OCI-LY7 (cell line): ENCODE measurements at regions of chr12 and their contacts with region 1.

Region 1: DNA sequence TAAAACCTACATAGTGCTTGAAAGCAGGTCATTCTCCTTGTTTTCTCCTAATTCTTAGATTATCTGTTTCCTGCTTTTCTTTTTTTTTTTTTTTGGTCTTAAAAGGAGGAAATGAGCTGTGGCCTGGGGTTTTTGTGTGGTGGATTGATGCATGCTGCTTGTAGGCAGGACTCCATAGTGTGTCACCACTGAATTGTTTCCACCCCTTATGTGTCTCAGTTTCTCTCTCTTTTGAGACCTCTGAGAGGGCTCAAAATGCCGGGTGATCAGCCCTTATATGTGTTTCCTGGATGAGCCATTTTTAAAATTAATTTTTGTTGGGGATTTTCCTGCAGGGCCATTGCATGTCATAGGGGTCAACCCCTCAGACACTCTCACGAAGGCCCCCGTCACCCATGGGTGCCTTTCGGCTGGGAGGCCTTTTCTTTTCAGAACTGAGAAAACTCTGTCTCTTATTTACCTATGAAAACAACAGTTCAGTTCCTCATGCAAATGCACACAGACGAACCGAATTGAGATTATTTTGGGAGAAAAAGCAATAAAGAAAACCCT is 32.0 kb upstream of the LRRK2 start:
- DNase-seq: peak; percentile 47
- H3K4me3 ChIP-seq: no peak overlapping the region
- H3K27ac ChIP-seq: peak overlapping the region; percentile 2
- H3K4me1 ChIP-seq: peaks cover 9% of the 10 kb centered on the region
- CTCF ChIP-seq: no peak

Region 2: DNA sequence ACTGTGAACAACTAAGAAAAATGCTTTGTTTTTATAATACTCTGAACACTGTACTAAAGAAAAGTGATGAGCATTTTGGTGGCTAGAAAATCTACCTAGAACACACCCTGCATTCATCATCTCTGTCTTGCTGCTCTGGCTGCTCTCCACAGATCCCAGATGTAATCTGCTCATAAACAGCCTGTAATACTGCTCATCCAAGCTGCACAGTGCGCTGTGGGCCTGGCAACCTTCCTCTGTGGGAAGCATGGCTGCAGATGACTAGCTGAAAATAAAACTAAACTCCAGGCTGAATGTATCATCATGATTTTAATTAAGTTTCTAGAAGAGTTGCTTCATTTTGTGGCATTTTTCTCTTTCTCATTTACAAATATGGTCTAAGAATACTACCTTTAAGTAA is 287.6 kb before region 1 on chr12:
- CTCF ChIA-PET with region 1: no interaction called
- POLR2A ChIA-PET with region 1: no interaction called
- intact Hi-C with region 1: no loop called
- DNase-seq: no peak
- H3K4me3 ChIP-seq: no peak overlapping the region
- H3K27ac ChIP-seq: no peak overlapping the region
- H3K4me1 ChIP-seq: no peaks in the 10 kb centered on the region
- CTCF ChIP-seq: no peak

Region 3: GRCh38 chr12:40181490-40181889 is 11.3 kb before region 1 on chr12:
- CTCF ChIA-PET with region 1: no interaction called
- POLR2A ChIA-PET with region 1: interaction called, 29 read pairs
- intact Hi-C with region 1: no loop called
- DNase-seq: no peak
- H3K4me3 ChIP-seq: no peak overlapping the region
- H3K27ac ChIP-seq: no peak overlapping the region
- H3K4me1 ChIP-seq: no peaks in the 10 kb centered on the region
- CTCF ChIP-seq: no peak

Region 4: GRCh38 chr12:40208707-40209446 is 16.1 kb after region 1 on chr12:
- CTCF ChIA-PET with region 1: no interaction called
- POLR2A ChIA-PET with region 1: interaction called, 32 read pairs
- intact Hi-C with region 1: no loop called
- DNase-seq: peak; percentile 57
- H3K4me3 ChIP-seq: peak overlapping the region; percentile 3
- H3K27ac ChIP-seq: peak overlapping the region; percentile 25
- H3K4me1 ChIP-seq: peaks cover 17% of the 10 kb centered on the region
- CTCF ChIP-seq: no peak